BJ (cell line): ENCODE measurements at regions of chr6 and their contacts with region 1.

Region 1: DNA sequence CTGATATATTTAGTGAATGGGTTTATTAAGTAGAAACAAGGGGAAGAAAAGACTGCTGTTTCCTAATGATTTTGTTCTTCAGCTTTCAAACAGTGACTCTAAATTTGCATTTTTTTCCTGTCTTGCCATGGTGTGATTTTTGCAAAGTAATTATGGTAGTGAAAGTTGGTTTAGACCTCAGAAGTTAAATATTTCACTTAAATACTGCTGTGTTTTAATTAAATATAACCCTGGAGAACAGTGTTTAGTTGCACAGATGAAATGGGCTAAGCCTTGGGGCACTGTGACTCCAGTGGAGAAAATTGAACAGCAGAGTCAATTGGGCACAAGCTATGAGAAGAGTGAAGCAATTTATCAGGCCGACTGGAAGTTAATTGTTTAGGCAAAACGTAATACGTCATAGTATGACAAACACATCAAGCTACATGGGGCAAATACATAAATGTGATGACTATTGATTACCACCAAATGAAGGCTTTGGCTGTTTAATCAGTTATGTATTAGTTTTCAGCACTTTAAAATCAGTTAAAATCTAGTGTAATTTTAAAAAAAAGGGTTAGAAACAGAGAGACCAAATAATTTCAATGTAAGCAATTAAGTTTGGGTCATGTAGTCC is 111.2 kb upstream of the MCHR2 start:
- DNase-seq: no peak
- H3K4me3 ChIP-seq: no peak overlapping the region
- H3K27me3 ChIP-seq: no peaks in the 10 kb centered on the region
- CTCF ChIP-seq: no peak

Region 2: DNA sequence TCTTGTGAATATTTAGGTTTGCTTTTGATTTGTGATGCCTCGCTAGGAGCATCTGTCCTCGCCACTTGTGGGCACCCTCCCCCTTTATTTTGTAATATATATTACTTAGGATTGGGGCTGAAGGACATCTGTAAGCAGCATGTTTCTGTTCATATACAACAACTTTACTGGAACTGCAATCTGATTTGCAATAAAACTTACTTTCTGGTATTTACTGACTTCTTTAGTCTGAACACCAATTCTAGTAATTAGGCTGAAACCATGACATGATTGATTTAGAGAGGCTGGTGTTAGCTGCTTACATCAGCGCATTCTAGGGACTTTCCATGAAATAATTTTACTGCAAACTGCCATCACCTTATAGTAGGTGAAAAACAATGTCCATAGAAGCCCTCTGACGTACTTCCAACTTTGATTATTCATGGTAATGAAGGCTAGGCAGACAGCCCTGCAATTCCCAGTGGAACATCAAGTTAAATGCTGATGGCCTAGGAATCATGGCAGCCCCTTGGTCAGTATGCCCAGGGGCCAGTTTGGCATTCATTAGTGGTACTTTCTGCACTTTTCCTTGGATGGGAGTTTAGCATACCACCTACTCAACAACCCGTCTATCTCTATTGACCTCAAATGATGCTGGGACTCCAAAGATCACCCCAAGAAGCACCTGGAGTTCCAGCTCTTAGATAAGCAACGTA is 21.7 kb after region 1 on chr6:
- CTCF ChIA-PET with region 1: interaction called, 10 read pairs
- POLR2A ChIA-PET with region 1: no interaction called
- DNase-seq: no peak
- H3K4me3 ChIP-seq: no peak overlapping the region
- H3K27me3 ChIP-seq: no peaks in the 10 kb centered on the region
- CTCF ChIP-seq: no peak

Region 3: GRCh38 chr6:100138346-100139022 is 33.2 kb after region 1 on chr6:
- CTCF ChIA-PET with region 1: no interaction called
- POLR2A ChIA-PET with region 1: no interaction called
- DNase-seq: no peak
- H3K4me3 ChIP-seq: no peak overlapping the region
- H3K27me3 ChIP-seq: no peaks in the 10 kb centered on the region
- CTCF ChIP-seq: no peak

Region 4: GRCh38 chr6:100194535-100194934 is 89.3 kb after region 1 on chr6:
- CTCF ChIA-PET with region 1: no interaction called
- POLR2A ChIA-PET with region 1: no interaction called
- DNase-seq: no peak
- H3K4me3 ChIP-seq: no peak overlapping the region
- H3K27me3 ChIP-seq: no peaks in the 10 kb centered on the region
- CTCF ChIP-seq: no peak

Region 5: GRCh38 chr6:100479179-100480035 is 374.2 kb after region 1 on chr6:
- CTCF ChIA-PET with region 1: interaction called, 19 read pairs
- POLR2A ChIA-PET with region 1: no interaction called
- DNase-seq: no peak
- H3K4me3 ChIP-seq: no peak overlapping the region
- H3K27me3 ChIP-seq: no peaks in the 10 kb centered on the region
- CTCF ChIP-seq: peak; percentile 70

Region 6: DNA sequence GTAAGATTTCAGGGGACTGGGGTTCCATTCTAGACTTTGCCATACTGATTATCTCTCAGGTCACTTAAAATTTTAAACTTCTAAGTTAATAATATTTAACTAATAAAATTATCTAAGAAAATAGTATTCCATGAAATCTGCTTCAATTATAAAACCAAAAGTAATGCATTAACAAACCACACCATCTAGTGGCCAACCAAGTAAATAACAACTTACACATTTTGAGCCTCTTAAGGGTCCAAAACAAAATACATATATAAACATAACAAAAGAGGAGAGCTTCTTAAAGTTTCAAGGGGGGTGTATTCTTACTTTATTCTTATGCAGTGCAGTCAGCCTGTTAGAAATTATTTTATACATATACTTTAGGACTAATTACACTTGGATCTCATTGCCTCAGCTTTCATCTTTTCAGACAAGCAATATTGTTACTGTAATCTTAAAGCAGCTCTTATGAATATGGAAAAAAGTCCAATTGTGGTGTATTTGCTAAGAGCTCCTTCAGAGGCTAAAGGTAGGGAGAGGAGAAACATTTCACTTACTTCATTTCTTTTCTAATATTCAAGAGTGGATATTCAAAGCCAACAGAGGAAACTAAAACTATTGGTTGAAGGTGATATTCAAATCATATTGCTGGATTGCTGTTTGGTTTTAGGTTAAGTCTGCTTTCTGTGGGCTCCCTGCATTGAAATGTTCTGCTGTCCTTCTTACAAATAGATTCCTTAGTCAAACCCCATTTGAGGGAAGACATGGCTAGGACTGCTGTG is 559.2 kb after region 1 on chr6:
- CTCF ChIA-PET with region 1: interaction called, 22 read pairs
- POLR2A ChIA-PET with region 1: no interaction called
- DNase-seq: no peak
- H3K4me3 ChIP-seq: no peak overlapping the region
- H3K27me3 ChIP-seq: no peaks in the 10 kb centered on the region
- CTCF ChIP-seq: peak; percentile 59